ENCODE measurements at regions of chr11 and their contacts with region 1.

Region 1: GRCh38 chr11:7513234-7514098 is at the start of gene PPFIBP2:
- DNase-seq: peak; percentile 51 to 91
- H3K4me3 ChIP-seq: peak within 1 kb of the TSS; percentile 71 to 85
- H3K27ac ChIP-seq: peak within 1 kb of the TSS; percentile 90 to 94
- H3K4me1 ChIP-seq: peaks cover 5 to 25% of the 10 kb centered on the region in 2 donors
- H3K27me3 ChIP-seq: no peaks in the 10 kb centered on the region
- CTCF ChIP-seq: peak; percentile 43 to 64 (median 45)
- total RNA-seq, gene PPFIBP2: 4.2 TPM

Region 2: GRCh38 chr11:5690216-5690615 is 1823.2 kb before region 1 on chr11:
- intact Hi-C with region 1: loop called (anchors 10 kb)
- DNase-seq: no peak
- H3K4me3 ChIP-seq: peak overlapping the region; percentile 48 to 63
- H3K27ac ChIP-seq: peak overlapping the region; percentile 82 to 87
- H3K4me1 ChIP-seq: peaks cover 3 to 20% of the 10 kb centered on the region in 2 donors
- H3K27me3 ChIP-seq: no peaks in the 10 kb centered on the region
- CTCF ChIP-seq: no peak

Region 3: DNA sequence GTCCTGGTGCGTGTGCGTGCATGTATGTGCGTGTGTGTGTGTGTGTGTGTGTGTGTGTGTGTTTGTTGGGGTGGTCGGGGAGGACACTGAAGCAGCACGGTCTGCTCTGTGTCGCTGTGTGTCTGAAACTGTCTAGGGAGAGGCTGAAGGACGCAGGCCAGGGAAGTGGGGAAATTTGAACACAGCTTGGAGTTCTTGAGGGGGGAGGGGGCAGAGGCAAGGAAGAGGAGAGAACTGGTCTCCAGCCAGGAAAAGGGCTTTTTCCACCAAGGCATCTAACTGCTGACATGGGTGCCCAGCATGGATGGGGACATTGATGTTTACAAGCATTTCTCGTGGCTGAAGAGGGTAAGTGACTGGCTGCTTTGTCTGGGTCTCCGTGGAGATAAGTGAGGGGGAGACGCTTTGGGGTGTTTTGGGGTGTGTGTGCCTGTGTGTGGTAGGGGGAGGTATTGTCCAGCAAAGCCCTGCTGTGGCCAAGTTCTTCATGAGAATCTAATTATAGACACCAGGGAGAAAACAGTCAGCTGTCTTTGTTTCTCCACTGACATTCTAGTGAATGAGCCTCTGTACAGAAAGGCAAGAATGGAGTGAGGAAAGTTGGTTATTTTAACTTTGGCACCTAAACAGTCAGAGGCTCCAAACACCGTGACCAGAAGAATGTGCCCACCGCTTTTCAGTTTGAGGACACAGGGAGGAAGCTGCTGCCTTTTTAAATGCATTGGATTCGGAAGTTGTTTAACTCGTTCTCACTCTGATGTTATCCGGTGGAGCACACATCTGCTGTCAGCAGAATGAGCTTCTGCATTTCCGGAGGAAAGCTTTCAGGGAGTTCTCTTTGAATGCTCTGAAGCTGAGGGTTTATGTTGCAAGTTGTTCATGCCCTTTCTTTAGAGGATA is 64.1 kb after region 1 on chr11:
- intact Hi-C with region 1: loop called (anchors 1 kb)
- DNase-seq: peak in 1 of 2 donors; percentile 72
- H3K4me3 ChIP-seq: peak overlapping the region; percentile 46 to 51
- H3K27ac ChIP-seq: peak overlapping the region; percentile 83 to 93
- H3K4me1 ChIP-seq: peaks cover 16 to 59% of the 10 kb centered on the region in 2 donors
- H3K27me3 ChIP-seq: no peaks in the 10 kb centered on the region
- CTCF ChIP-seq: peak in 1 of 3 experiments; percentile 3

Region 4: DNA sequence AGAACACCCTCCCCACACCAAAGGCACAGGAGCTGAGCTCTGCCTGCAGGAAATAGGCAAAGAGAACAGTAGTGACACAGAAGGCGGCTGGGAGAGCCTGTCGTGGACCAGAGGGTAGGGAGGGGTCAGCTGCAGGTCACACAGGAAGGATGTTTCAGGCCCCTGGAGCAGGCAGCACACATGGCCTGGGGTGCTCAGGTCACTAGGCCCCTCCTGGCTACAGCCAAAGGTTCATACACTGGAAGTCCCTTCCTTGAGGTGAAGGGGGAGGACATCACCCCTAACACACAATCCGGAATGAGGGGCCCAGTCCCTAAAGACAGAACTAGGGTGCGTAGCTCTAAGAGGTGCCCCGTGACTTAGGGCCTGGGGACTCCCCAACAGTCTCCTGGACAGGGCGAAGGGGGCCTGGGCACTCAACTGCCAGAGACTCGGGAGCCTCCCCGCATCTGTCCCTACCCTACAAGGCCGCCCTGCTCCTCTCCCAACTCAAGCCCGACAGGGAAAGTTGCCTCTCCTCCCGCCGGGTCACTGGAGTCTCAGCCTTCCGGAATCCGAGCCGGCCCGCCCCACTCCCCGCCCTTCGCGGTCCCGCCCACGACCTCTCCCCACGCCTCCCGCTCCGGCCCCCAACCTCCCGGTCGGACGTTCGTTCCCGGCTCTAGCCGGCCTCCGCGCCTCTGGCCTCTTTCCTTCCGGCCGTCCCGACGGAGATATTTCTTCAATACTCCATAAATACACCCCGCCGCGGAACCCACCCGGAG is 159.7 kb after region 1 on chr11 and contains the start of gene CYB5R2:
- intact Hi-C with region 1: loop called (anchors 5 kb)
- DNase-seq: peak in 1 of 2 donors; percentile 83
- H3K4me3 ChIP-seq: peak within 1 kb of the TSS; percentile 62 to 80
- H3K27ac ChIP-seq: peak within 1 kb of the TSS; percentile 49 to 60
- H3K4me1 ChIP-seq: peaks cover 0 to 9% of the 10 kb centered on the region in 2 donors
- H3K27me3 ChIP-seq: no peaks in the 10 kb centered on the region
- CTCF ChIP-seq: no peak
- total RNA-seq, gene CYB5R2: 35.8 TPM

Region 5: GRCh38 chr11:7694235-7694634 is 180.8 kb after region 1 on chr11:
- intact Hi-C with region 1: loop called (anchors 2 kb)
- DNase-seq: no peak
- H3K4me3 ChIP-seq: peak overlapping the region; percentile 9 to 38
- H3K27ac ChIP-seq: no peak overlapping the region
- H3K4me1 ChIP-seq: no peaks in the 10 kb centered on the region
- H3K27me3 ChIP-seq: no peaks in the 10 kb centered on the region
- CTCF ChIP-seq: no peak

Region 6: GRCh38 chr11:7986768-7987559 is 473.5 kb after region 1 on chr11 and contains the start of gene EIF3F:
- intact Hi-C with region 1: loop called (anchors 5 kb)
- DNase-seq: peak; percentile 77 to 96
- H3K4me3 ChIP-seq: peak within 1 kb of the TSS; percentile 70 to 90
- H3K27ac ChIP-seq: peak within 1 kb of the TSS; percentile 76 to 81
- H3K4me1 ChIP-seq: peaks cover 8 to 27% of the 10 kb centered on the region in 2 donors
- H3K27me3 ChIP-seq: no peaks in the 10 kb centered on the region
- CTCF ChIP-seq: peak; percentile 81 to 89 (median 85)
- total RNA-seq, gene EIF3F: 319 TPM

Measured in ascending aorta (tissue), 2 donors.